Vagina (tissue), 2 donors: ENCODE measurements at regions of chr9 and their contacts with region 1.

Region 1: DNA sequence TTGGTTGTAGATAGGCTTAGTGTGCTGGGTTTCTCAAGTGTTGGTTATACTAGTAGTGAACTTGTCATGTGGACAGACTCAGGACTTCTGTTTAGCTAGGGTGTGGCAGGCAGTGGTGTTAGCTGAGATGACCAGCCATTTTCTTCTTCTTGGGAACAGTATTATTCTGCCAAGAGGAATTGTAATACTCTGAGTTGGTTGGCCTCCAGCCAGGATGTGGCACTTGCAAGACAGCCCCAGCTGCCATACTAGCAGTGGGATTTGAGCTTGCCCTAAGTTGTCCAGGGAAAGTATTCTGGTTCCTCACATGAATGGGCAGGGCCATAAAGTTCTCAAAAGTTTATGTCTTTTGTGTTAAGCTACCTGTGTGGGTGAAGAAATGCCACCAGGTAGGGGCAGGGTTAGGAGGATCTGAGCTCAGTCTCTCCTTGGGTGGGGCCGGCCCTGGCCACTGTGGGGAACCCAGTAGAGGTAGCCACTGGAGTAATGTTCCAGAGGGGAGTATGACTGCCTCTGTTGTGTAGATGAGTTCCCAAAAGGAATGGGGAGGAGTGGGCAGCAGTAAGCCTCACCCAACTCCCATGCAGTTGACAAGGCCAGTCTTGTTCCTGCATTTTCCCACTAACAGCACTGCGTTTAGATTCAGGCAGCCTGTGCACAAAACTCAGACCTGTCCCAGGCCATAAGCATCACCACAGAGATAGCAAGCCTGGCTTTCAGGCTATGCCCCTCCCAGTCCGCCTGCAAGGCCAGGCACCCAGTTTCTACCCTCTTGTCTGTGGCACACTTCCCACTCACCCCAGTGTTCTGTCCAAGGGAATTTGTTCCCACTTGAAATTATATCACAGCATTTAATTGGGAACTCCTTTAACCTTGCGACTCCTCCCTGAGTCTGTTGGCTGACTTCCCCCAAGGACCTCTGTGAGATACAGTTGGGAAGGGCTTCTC is 250.7 kb downstream of the ANXA1 start:
- DNase-seq: no peak
- H3K4me3 ChIP-seq: no peak overlapping the region
- H3K27ac ChIP-seq: no peak overlapping the region
- H3K4me1 ChIP-seq: no peaks in the 10 kb centered on the region
- H3K27me3 ChIP-seq: no peaks in the 10 kb centered on the region
- CTCF ChIP-seq: no peak
- POLR2A ChIP-seq: no peak

Region 2: GRCh38 chr9:71431931-71432330 is 1970.4 kb before region 1 on chr9:
- intact Hi-C with region 1: loop called (anchors 5 kb)
- DNase-seq: no peak
- H3K4me3 ChIP-seq: no peak overlapping the region
- H3K27ac ChIP-seq: no peak overlapping the region
- H3K4me1 ChIP-seq: no peaks in the 10 kb centered on the region
- H3K27me3 ChIP-seq: no peaks in the 10 kb centered on the region
- CTCF ChIP-seq: no peak
- POLR2A ChIP-seq: no peak